MCF 10A (cell line): ENCODE measurements at regions of chr15 and their contacts with region 1.

Region 1: GRCh38 chr15:57561041-57561711 is 30.5 kb upstream of the MYZAP start:
- DNase-seq: peak; percentile 87
- H3K4me3 Mint-ChIP-seq: no peak overlapping the region
- H3K27ac Mint-ChIP-seq: no peak overlapping the region
- H3K4me1 Mint-ChIP-seq: peaks cover 18% of the 10 kb centered on the region
- H3K27me3 Mint-ChIP-seq: no peaks in the 10 kb centered on the region
- CTCF ChIP-seq: peak; percentile 86

Region 2: GRCh38 chr15:57541805-57542504 is 19.2 kb before region 1 on chr15:
- CTCF ChIA-PET with region 1: interaction called, 17 read pairs
- POLR2A ChIA-PET with region 1: no interaction called
- intact Hi-C with region 1: no loop called
- DNase-seq: peak; percentile 80
- H3K4me3 Mint-ChIP-seq: no peak overlapping the region
- H3K27ac Mint-ChIP-seq: no peak overlapping the region
- H3K4me1 Mint-ChIP-seq: no peaks in the 10 kb centered on the region
- H3K27me3 Mint-ChIP-seq: peaks cover 17% of the 10 kb centered on the region
- CTCF ChIP-seq: peak; percentile 78

Region 3: GRCh38 chr15:57596978-57597377 is 35.8 kb after region 1 on chr15:
- CTCF ChIA-PET with region 1: interaction called, 33 read pairs
- POLR2A ChIA-PET with region 1: interaction called, 5 read pairs
- intact Hi-C with region 1: no loop called
- DNase-seq: peak; percentile 84
- H3K4me3 Mint-ChIP-seq: no peak overlapping the region
- H3K27ac Mint-ChIP-seq: no peak overlapping the region
- H3K4me1 Mint-ChIP-seq: peaks cover 13% of the 10 kb centered on the region
- H3K27me3 Mint-ChIP-seq: no peaks in the 10 kb centered on the region
- CTCF ChIP-seq: no peak

Region 4: DNA sequence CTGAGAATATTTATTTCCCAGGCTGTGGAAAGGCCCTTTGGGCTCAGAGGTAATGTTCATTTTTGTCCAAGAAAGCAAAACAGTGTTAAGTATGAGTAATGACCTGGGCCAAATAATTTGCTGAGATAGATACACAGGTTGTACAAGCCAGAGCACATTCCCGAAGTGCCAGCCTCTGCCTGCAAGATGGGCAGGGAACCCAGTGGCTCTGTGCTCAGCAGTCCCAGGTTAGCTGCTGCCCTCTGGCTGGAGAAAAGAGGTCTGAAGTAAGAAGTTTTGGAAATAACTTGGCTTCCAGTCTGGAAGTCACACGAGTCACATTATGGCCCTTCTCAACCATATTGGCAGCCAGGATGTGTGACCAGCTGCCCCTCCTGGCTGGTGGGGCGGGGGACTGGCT is 50.8 kb after region 1 on chr15:
- CTCF ChIA-PET with region 1: interaction called, 297 read pairs
- POLR2A ChIA-PET with region 1: interaction called, 23 read pairs
- intact Hi-C with region 1: loop called (anchors 1 kb)
- DNase-seq: peak; percentile 84
- H3K4me3 Mint-ChIP-seq: no peak overlapping the region
- H3K27ac Mint-ChIP-seq: peak overlapping the region; percentile 35
- H3K4me1 Mint-ChIP-seq: peaks cover 51% of the 10 kb centered on the region
- H3K27me3 Mint-ChIP-seq: no peaks in the 10 kb centered on the region
- CTCF ChIP-seq: peak; percentile 51

Region 5: DNA sequence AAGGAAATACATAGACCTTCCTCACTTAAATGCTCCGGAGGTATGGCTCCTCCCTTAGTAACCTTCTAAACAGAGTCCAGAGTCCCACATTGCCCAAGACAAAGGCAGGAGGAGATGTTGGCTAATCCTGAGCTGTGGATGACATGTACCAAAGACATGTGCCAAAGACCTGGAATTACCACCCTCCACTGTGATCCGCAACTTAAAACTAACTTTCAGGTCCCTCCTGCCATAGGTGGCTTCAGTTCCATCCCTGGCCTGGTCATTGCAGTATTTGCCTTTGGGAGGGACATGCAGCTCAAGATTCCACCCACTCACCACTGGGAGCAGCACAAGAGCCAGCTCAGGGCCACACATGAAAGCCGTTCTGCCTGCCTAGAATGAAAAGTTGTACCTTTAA is 58.6 kb after region 1 on chr15:
- CTCF ChIA-PET with region 1: interaction called, 297 read pairs
- POLR2A ChIA-PET with region 1: no interaction called
- intact Hi-C with region 1: no loop called
- DNase-seq: no peak
- H3K4me3 Mint-ChIP-seq: no peak overlapping the region
- H3K27ac Mint-ChIP-seq: no peak overlapping the region
- H3K4me1 Mint-ChIP-seq: no peaks in the 10 kb centered on the region
- H3K27me3 Mint-ChIP-seq: no peaks in the 10 kb centered on the region
- CTCF ChIP-seq: no peak

Region 6: DNA sequence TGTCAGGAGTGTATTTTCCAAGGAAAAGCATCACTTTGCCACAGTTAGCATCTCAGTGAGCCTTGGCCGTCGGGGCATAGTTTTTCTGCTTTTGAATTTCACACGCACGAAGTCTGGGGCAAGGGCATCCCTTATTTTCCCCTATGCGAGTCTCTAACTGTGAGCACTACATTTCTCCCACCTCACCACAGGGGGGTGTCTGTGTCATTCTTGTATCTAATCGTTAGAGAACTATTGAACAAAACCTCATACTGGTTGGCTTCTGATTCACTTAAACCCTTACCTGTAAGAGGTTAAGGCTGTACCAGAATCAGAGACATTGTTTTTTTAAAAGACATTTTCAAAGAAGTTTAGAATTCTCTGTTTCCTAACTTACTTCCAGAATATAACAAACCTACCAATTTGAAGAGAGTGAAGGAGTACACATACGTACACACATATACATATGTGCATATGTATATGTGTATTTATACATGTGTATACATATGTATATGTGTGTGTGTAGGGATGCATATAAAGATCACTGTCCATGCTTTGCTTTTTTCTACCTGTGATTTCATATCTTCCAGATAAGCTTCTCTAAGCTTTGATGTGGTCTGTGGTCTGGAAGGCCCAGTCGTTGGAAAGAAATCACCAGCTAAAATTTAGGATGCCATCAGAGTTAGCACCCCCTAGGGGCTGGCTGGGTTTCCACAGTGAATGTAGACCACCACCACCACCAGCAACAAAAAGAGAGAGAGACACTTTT is 79.9 kb after region 1 on chr15:
- CTCF ChIA-PET with region 1: interaction called, 10 read pairs
- POLR2A ChIA-PET with region 1: no interaction called
- intact Hi-C with region 1: no loop called
- DNase-seq: peak; percentile 51
- H3K4me3 Mint-ChIP-seq: no peak overlapping the region
- H3K27ac Mint-ChIP-seq: no peak overlapping the region
- H3K4me1 Mint-ChIP-seq: no peaks in the 10 kb centered on the region
- H3K27me3 Mint-ChIP-seq: no peaks in the 10 kb centered on the region
- CTCF ChIP-seq: peak; percentile 8

Region 7: DNA sequence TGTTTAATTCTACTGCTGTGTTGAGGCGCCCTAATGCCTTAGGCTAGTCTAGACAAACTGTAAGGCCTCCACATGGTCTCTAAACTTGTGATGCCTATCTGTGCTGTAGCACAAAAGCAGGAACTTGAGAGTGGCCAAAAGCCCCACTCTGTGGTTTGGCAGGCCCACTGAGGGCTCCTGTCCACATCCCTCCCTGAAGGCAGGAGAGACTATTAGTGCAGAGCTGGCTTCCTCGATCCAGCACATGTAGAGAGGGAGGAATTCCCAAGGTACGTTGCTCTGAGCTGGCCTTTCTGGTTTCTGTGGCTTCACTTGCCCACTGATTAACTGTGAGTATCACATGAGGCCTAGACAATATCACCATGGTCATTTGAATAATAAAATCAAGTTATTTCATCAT is 235.9 kb after region 1 on chr15:
- CTCF ChIA-PET with region 1: no interaction called
- POLR2A ChIA-PET with region 1: no interaction called
- intact Hi-C with region 1: no loop called
- DNase-seq: no peak
- H3K4me3 Mint-ChIP-seq: no peak overlapping the region
- H3K27ac Mint-ChIP-seq: no peak overlapping the region
- H3K4me1 Mint-ChIP-seq: no peaks in the 10 kb centered on the region
- H3K27me3 Mint-ChIP-seq: no peaks in the 10 kb centered on the region
- CTCF ChIP-seq: no peak